ENCODE measurements at regions of chrX and their contacts with region 1.

Region 1: GRCh38 chrX:2647627-2648026 is 43.5 kb upstream of the CD99 start:
- DNase-seq: peak; percentile 24
- H3K4me3 Mint-ChIP-seq: no peak overlapping the region
- H3K27ac Mint-ChIP-seq: peak overlapping the region; percentile 37
- H3K4me1 Mint-ChIP-seq: peaks cover 21% of the 10 kb centered on the region
- H3K27me3 Mint-ChIP-seq: no peaks in the 10 kb centered on the region

Region 2: GRCh38 chrX:2696698-2697215 is 49.1 kb after region 1 on chrX:
- CTCF ChIA-PET with region 1: no interaction called
- intact Hi-C with region 1: loop called (anchors 2 kb)
- DNase-seq: peak; percentile 76
- H3K4me3 Mint-ChIP-seq: peak overlapping the region; percentile 58
- H3K27ac Mint-ChIP-seq: peak overlapping the region; percentile 99
- H3K4me1 Mint-ChIP-seq: peaks cover 80% of the 10 kb centered on the region
- H3K27me3 Mint-ChIP-seq: no peaks in the 10 kb centered on the region

Measured in activated naive CD4-positive, alpha-beta T cell treated with anti-CD3 and anti-CD28 coated beads for 36 hours (primary cell).